Gastrocnemius medialis (tissue), 4 donors: ENCODE measurements at regions of chr1 and their contacts with region 1.

Region 1: GRCh38 chr1:146012737-146013403 is 8.7 kb downstream of the HJV start:
- DNase-seq: no peak
- ATAC-seq: peak; percentile 68 to 75
- H3K4me3 ChIP-seq: no peak overlapping the region
- H3K27ac ChIP-seq: peak overlapping the region; percentile 7 to 40 (median 20)
- H3K4me1 ChIP-seq: peaks cover 6 to 17% of the 10 kb centered on the region in 2 donors
- H3K27me3 ChIP-seq: no peaks in the 10 kb centered on the region
- CTCF ChIP-seq: peak; percentile 67 to 77 (median 73)
- POLR2A ChIP-seq: no peak

Region 2: GRCh38 chr1:145845514-145846161 is 167.2 kb before region 1 on chr1 and contains the start of gene NUDT17:
- in situ Hi-C with region 1: loop called in 3 of 4 experiments (anchors 5 to 10 kb)
- intact Hi-C with region 1: loop called (anchors 1 kb)
- DNase-seq: peak; percentile 62 to 74
- ATAC-seq: peak; percentile 75 to 84
- H3K4me3 ChIP-seq: peak within 1 kb of the TSS; percentile 51 to 65 (median 58)
- H3K27ac ChIP-seq: peak within 1 kb of the TSS; percentile 69 to 81 (median 77)
- H3K4me1 ChIP-seq: peaks cover 6 to 14% of the 10 kb centered on the region in 2 donors
- H3K27me3 ChIP-seq: no peaks in the 10 kb centered on the region
- CTCF ChIP-seq: peak; percentile 89 to 97 (median 94)
- POLR2A ChIP-seq: peak in 1 of 2 donors; percentile 8
- total RNA-seq, gene NUDT17: 0.46 to 2.2 (median 0.51) TPM in 3 of 4 donors, not detected in the other

Region 3: DNA sequence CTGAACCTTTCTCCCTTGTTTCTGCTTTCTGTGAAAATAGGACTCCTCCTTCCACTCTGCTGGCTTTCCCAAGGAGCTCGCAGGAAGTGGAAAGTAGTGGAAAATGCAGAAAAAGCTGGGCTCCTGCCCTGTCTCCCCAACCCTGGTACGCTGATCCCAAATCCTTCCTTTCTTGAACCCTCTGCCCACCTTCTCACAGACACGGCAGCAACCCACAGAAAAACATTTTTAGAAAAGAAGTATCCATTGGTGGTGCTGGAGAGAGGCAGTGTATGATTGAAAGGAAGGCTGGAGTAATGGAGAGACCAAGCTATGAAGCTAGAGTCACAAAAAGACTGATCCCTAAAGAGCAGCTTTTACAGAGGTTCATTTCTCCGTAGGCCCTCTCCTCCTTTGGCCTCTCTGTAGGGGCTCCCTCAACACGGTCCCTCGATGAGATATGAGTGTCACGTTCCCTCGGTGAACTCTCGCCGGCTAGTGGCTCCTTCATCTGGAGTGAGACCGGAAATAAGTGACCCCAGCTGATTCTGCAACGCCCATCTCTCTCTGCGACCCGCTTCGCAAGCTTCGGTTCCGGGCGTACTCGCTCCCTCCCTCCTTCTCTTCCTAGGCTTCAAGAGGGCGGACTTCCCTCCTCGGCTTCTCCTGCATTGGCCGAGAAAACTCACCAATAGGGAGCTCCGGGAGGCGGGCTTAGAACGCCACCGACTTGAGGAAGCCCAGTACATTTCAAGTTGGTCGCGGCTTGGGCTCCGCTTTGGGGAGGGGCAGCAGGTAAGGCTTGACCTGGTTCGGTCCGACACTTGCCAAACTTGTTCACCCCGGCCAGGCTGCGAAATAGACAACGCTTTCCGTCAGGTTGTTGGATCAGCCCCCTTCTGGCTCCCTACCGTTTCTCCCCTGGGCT is 48.6 kb before region 1 on chr1 and contains the starts of genes ANKRD34A and POLR3GL:
- in situ Hi-C with region 1: no loop called
- intact Hi-C with region 1: no loop called
- DNase-seq: peak; percentile 97
- ATAC-seq: peak; percentile 81 to 88
- H3K4me3 ChIP-seq: peak within 1 kb of the TSS; percentile 67 to 82 (median 73)
- H3K27ac ChIP-seq: peak within 1 kb of the TSS; percentile 88 to 99 (median 96)
- H3K4me1 ChIP-seq: peaks cover 28 to 34% of the 10 kb centered on the region in 2 donors
- H3K27me3 ChIP-seq: no peaks in the 10 kb centered on the region
- CTCF ChIP-seq: peak in 1 of 5 experiments; percentile 1
- POLR2A ChIP-seq: peak; percentile 91 to 97
- total RNA-seq, gene ANKRD34A: 3.3 to 19.0 (median 6.7) TPM
- total RNA-seq, gene POLR3GL: 43.5 to 78.8 (median 59.4) TPM